ENCODE measurements at regions of chr19 and their contacts with region 1.

Region 1: GRCh38 chr19:56170261-56170660 is 5.5 kb upstream of the GALP start:
- DNase-seq: peak; percentile 94
- ATAC-seq: peak; percentile 87
- H3K4me3 ChIP-seq: no peak overlapping the region
- H3K27ac ChIP-seq: peak overlapping the region; percentile 36
- H3K4me1 ChIP-seq: peaks cover 9% of the 10 kb centered on the region
- H3K27me3 ChIP-seq: peaks cover 8% of the 10 kb centered on the region
- CTCF ChIP-seq: no peak

Region 2: DNA sequence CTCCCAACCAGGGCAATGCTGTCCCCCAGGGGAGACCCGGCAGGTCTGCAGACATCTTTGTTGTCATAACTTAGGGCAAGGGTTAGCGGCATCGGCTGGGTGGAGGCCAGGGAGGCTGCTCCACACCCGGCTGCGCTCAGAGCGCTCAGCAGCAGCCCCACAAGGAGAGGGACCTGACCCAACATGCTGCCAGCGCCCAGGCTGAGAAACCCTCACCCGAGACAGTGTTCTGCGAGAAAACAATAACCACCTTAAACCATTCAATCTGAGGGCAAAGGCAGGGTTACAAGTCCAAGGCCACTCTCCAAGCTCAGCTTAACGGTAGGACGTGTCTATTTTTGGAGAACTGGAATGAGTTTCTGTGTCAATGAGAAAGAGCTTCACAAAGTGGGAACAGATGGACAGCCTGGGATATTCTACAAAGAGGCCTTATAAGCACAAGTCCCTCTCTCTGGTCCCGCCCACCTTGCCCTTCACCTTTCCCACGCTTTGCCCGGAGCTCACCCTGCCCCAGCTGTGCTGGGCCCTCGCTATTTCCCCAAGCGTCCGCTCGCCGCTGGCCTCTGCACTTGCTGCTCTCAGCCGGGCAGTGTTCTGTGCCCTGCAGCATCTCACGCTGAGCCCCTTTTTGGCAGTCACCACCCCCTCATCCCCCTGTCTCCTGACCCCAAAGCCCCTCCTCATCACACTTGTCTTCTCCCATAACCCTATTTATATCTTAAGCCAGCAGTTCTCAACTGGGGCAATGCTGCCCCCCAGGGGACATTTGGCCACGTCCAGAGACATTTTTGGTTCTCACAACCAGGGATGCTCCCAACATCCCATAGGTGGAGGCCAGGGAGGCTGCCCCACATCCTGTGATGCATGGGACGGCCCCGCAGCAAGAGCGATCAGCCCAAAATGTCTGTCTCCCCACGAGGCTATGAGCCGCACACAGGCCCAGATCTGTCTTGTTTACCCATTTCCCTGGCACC is 1070.4 kb before region 1 on chr19:
- CTCF ChIA-PET with region 1: interaction called, 10 read pairs
- POLR2A ChIA-PET with region 1: no interaction called
- intact Hi-C with region 1: no loop called
- DNase-seq: peak; percentile 48
- ATAC-seq: peak; percentile 55; the same call in 1 of the 2 replicates
- H3K4me3 ChIP-seq: no peak overlapping the region
- H3K27ac ChIP-seq: no peak overlapping the region
- H3K4me1 ChIP-seq: no peaks in the 10 kb centered on the region
- H3K27me3 ChIP-seq: no peaks in the 10 kb centered on the region
- CTCF ChIP-seq: peak; percentile 65

Region 3: DNA sequence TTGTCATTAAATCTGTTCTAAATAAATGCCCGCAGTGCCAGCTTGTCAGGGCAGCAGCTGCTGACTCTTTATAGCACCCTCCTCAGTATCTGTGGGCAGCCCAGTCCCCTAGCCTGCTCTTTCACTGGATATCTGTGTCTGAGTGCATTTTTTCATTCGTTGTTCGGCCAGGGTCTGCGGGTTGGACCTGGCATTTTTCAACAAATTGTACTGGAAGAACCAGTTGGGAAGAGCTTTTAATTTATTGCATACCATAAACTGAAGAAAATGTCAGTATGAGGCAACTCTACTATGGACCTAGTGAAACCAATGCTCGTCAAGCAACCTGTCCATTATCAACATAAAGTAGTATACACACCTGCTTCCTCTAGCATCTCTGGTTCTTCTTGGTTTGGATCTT is 246.7 kb before region 1 on chr19:
- CTCF ChIA-PET with region 1: no interaction called
- POLR2A ChIA-PET with region 1: interaction called, 13 read pairs
- intact Hi-C with region 1: no loop called
- DNase-seq: no peak
- ATAC-seq: no peak
- H3K4me3 ChIP-seq: no peak overlapping the region
- H3K27ac ChIP-seq: no peak overlapping the region
- H3K4me1 ChIP-seq: no peaks in the 10 kb centered on the region
- H3K27me3 ChIP-seq: peaks cover 27% of the 10 kb centered on the region
- CTCF ChIP-seq: no peak

Measured in PC-3 (cell line).